ENCODE measurements at regions of chr15 and their contacts with region 1.

Region 1: GRCh38 chr15:59688841-59689625 is at the start of gene BNIP2:
- DNase-seq: peak; percentile 98
- ATAC-seq: peak; percentile 96
- H3K4me3 ChIP-seq: peak within 1 kb of the TSS; percentile 86
- H3K27ac ChIP-seq: peak within 1 kb of the TSS; percentile 88
- H3K4me1 ChIP-seq: peaks cover 5% of the 10 kb centered on the region
- H3K27me3 ChIP-seq: no peaks in the 10 kb centered on the region
- CTCF ChIP-seq: no peak
- POLR2A ChIP-seq: peak; percentile 84
- RAD21 ChIP-seq: no peak
- total RNA-seq, gene BNIP2: 47.3 and 108 TPM in 2 replicates

Region 2: GRCh38 chr15:59372352-59373211 is 316.5 kb before region 1 on chr15 and contains the start of gene MYO1E:
- CTCF ChIA-PET with region 1: no interaction called
- POLR2A ChIA-PET with region 1: no interaction called
- dilution Hi-C with region 1: no loop called
- in situ Hi-C with region 1: no loop called
- intact Hi-C with region 1: no loop called
- DNase-seq: peak; percentile 97
- ATAC-seq: peak; percentile 94
- H3K4me3 ChIP-seq: peak within 1 kb of the TSS; percentile 67
- H3K27ac ChIP-seq: peak within 1 kb of the TSS; percentile 88
- H3K4me1 ChIP-seq: peaks cover 3% of the 10 kb centered on the region; the same call in 1 of the 2 replicates
- H3K27me3 ChIP-seq: no peaks in the 10 kb centered on the region
- CTCF ChIP-seq: no peak
- POLR2A ChIP-seq: peak; percentile 88
- RAD21 ChIP-seq: no peak
- total RNA-seq, gene MYO1E: 35.8 and 37.3 TPM in 2 replicates

Region 3: DNA sequence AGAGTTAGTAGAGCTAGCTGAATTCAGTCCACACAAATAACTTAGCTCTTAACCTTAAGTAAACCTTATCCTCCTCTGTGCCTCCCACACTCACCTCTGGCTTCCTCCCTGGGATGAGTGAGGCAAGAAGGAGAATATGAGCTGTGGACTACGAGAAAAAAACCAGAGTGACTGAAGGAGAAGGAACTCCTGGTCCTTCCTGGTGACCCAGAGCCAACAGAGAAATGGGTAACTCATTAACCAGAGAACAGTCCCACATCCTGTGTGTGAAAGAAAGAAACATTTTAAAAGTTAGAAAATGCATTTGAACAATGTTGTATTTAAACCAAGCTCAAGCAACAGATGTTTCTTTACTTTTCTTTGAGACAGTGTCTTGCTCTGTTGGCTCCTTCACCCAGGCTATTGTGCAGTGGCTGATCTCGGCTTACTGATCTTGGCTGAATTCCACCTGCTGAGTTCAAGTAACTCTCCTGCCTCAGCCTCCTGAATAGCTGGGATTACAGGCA is 278.6 kb before region 1 on chr15:
- CTCF ChIA-PET with region 1: no interaction called
- POLR2A ChIA-PET with region 1: no interaction called
- dilution Hi-C with region 1: no loop called
- in situ Hi-C with region 1: no loop called
- intact Hi-C with region 1: no loop called
- DNase-seq: no peak
- ATAC-seq: no peak
- H3K4me3 ChIP-seq: no peak overlapping the region
- H3K27ac ChIP-seq: no peak overlapping the region
- H3K4me1 ChIP-seq: no peaks in the 10 kb centered on the region
- H3K27me3 ChIP-seq: peaks cover 12% of the 10 kb centered on the region
- CTCF ChIP-seq: no peak
- POLR2A ChIP-seq: no peak
- RAD21 ChIP-seq: no peak

Region 4: DNA sequence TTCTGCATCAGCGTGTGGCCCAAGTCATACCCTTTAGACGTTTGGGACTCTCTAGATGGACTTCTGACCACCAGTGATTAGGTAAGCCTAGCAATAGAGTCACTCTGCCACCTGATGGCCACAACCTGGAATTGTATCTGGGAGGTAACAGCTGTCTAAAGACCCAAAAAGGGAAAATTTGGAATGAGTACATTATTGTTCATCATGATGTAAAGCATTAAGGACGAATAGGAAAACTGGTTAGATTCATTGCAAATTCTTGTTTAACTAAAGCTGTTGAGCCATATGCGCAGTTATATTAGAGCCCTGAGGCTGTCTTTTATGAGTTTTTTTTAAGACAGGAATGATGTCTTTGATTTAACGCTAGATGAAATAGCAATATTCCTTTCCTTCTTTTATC is 187.4 kb before region 1 on chr15:
- CTCF ChIA-PET with region 1: no interaction called
- POLR2A ChIA-PET with region 1: no interaction called
- dilution Hi-C with region 1: no loop called
- in situ Hi-C with region 1: no loop called
- intact Hi-C with region 1: no loop called
- DNase-seq: peak; percentile 55
- ATAC-seq: peak; percentile 61
- H3K4me3 ChIP-seq: no peak overlapping the region
- H3K27ac ChIP-seq: no peak overlapping the region
- H3K4me1 ChIP-seq: no peaks in the 10 kb centered on the region
- H3K27me3 ChIP-seq: peaks cover 7% of the 10 kb centered on the region
- CTCF ChIP-seq: peak; percentile 58
- POLR2A ChIP-seq: no peak
- RAD21 ChIP-seq: peak; percentile 65

Region 5: GRCh38 chr15:60128000-60128376 is 439.0 kb after region 1 on chr15:
- CTCF ChIA-PET with region 1: interaction called, 4 read pairs
- POLR2A ChIA-PET with region 1: no interaction called
- dilution Hi-C with region 1: no loop called
- in situ Hi-C with region 1: no loop called
- intact Hi-C with region 1: loop called (anchors 2 kb)
- DNase-seq: peak; percentile 6
- ATAC-seq: peak; percentile 31
- H3K4me3 ChIP-seq: peak overlapping the region; percentile 82
- H3K27ac ChIP-seq: peak overlapping the region; percentile 8; the same call in 1 of the 2 replicates
- H3K4me1 ChIP-seq: no peaks in the 10 kb centered on the region
- H3K27me3 ChIP-seq: peaks cover 8% of the 10 kb centered on the region; the same call in 1 of the 2 replicates
- CTCF ChIP-seq: no peak
- POLR2A ChIP-seq: no peak
- RAD21 ChIP-seq: no peak

Region 6: GRCh38 chr15:60444289-60444912 is 755.4 kb after region 1 on chr15:
- CTCF ChIA-PET with region 1: no interaction called
- POLR2A ChIA-PET with region 1: no interaction called
- dilution Hi-C with region 1: no loop called
- in situ Hi-C with region 1: loop called (anchors 25 kb)
- intact Hi-C with region 1: no loop called
- DNase-seq: peak; percentile 51
- ATAC-seq: peak; percentile 59
- H3K4me3 ChIP-seq: no peak overlapping the region
- H3K27ac ChIP-seq: no peak overlapping the region
- H3K4me1 ChIP-seq: peaks cover 2% of the 10 kb centered on the region
- H3K27me3 ChIP-seq: no peaks in the 10 kb centered on the region
- CTCF ChIP-seq: peak; percentile 76
- POLR2A ChIP-seq: no peak
- RAD21 ChIP-seq: peak; percentile 76

Region 7: GRCh38 chr15:60478566-60479360 is 789.7 kb after region 1 on chr15 and contains the start of gene ICE2:
- CTCF ChIA-PET with region 1: no interaction called
- POLR2A ChIA-PET with region 1: no interaction called
- dilution Hi-C with region 1: no loop called
- in situ Hi-C with region 1: no loop called
- intact Hi-C with region 1: loop called (anchors 10 kb)
- DNase-seq: peak; percentile 94
- ATAC-seq: peak; percentile 93
- H3K4me3 ChIP-seq: peak within 1 kb of the TSS; percentile 72
- H3K27ac ChIP-seq: peak within 1 kb of the TSS; percentile 88
- H3K4me1 ChIP-seq: peaks cover 3% of the 10 kb centered on the region
- H3K27me3 ChIP-seq: no peaks in the 10 kb centered on the region
- CTCF ChIP-seq: peak; percentile 10; the same call in 1 of the 2 replicates
- POLR2A ChIP-seq: peak; percentile 92
- RAD21 ChIP-seq: no peak
- total RNA-seq, gene ICE2: 21.1 and 22.8 TPM in 2 replicates

Region 8: GRCh38 chr15:60704129-60704528 is 1015.1 kb after region 1 on chr15:
- CTCF ChIA-PET with region 1: no interaction called
- POLR2A ChIA-PET with region 1: no interaction called
- dilution Hi-C with region 1: no loop called
- in situ Hi-C with region 1: no loop called
- intact Hi-C with region 1: no loop called
- DNase-seq: no peak
- ATAC-seq: no peak
- H3K4me3 ChIP-seq: no peak overlapping the region
- H3K27ac ChIP-seq: no peak overlapping the region
- H3K4me1 ChIP-seq: peaks cover 6% of the 10 kb centered on the region; the same call in 1 of the 2 replicates
- H3K27me3 ChIP-seq: no peaks in the 10 kb centered on the region
- CTCF ChIP-seq: no peak
- POLR2A ChIP-seq: no peak
- RAD21 ChIP-seq: no peak

Measured in IMR-90 (cell line).